ENCODE measurements at regions of chr6 and their contacts with region 1.

Region 1: DNA sequence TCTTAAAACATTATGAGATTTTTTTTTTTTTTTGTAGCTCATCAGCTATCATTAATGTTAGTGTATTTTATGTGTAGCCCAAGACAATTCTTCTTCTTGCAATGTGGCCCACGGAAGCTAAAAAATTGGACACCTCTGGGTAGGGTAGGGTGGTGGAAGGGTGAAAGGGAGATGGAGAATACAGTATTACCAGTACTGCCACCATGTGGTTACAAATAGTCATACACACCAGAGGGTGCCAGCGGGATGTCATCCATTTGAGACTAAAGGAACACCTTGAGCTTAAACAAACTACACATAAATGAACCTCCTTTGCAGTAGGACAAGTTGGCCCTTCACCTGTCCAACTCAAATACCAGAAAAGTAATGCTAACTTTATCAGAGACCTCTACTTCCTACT is 601.9 kb downstream of the HTR1B start:
- DNase-seq: no peak
- ATAC-seq: no peak

Region 2: GRCh38 chr6:75504465-75505228 is 1356.8 kb before region 1 on chr6:
- intact Hi-C with region 1: no loop called
- DNase-seq: no peak
- ATAC-seq: peak; percentile 83

Region 3: GRCh38 chr6:76682842-76683241 is 178.6 kb before region 1 on chr6:
- intact Hi-C with region 1: loop called (anchors 5 kb)
- DNase-seq: no peak
- ATAC-seq: no peak

Region 4: GRCh38 chr6:76914737-76915136 is 53.3 kb after region 1 on chr6:
- intact Hi-C with region 1: no loop called
- DNase-seq: no peak
- ATAC-seq: no peak

Measured in Right ventricle myocardium inferior (tissue), 1 donor.